ENCODE measurements at regions of chr1 and their contacts with region 1.

Region 1: DNA sequence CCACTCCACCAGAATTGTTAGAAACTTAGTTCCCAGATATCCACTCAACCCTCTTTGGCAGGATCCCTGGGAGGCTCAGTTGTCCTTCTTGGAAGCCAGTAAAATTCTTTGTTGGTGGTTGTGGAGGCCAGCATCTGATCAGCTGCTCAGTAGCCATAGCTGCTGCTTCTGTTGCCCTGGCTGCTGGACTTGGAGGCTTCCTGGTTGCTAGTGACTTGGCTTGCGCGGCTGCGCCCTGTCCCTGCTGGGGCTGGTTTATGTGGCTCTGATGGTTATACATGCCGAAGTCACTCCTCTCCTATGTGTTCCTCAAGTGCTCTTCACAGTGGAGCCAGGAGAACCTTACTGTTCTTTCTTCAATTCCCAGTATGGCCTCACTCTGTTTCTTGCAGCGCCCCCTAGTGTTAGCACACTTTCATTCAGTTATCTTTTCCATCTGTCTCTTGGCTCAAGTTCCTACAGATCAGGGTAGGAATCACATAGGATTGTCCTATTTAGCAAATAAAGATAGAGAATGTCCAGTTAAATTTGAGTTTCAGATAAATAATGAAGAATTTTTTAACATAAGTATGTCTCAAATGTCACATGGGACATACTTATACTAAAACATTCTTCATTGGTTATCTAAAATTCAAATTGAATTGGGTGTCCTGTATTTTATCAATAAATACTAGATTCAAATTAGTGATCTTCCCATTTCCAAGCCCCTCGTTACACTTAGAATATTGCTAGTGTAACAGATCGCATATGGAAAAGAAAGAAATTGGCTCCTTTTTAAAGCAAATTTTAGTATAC is 176.4 kb downstream of the TGFB2 start:
- DNase-seq: peak; percentile 51 to 85 (median 67)
- H3K4me3 ChIP-seq: no peak overlapping the region
- H3K27ac ChIP-seq: no peak overlapping the region
- H3K4me1 ChIP-seq: no peaks in the 10 kb centered on the region
- H3K27me3 ChIP-seq: no peaks in the 10 kb centered on the region
- CTCF ChIP-seq: peak; percentile 56 to 80 (median 72)
- POLR2A ChIP-seq: no peak

Region 2: GRCh38 chr1:218209351-218209861 is 312.2 kb before region 1 on chr1:
- intact Hi-C with region 1: no loop called
- DNase-seq: no peak
- H3K4me3 ChIP-seq: no peak overlapping the region
- H3K27ac ChIP-seq: no peak overlapping the region
- H3K4me1 ChIP-seq: no peaks in the 10 kb centered on the region
- H3K27me3 ChIP-seq: no peaks in the 10 kb centered on the region
- CTCF ChIP-seq: no peak
- POLR2A ChIP-seq: no peak

Region 3: DNA sequence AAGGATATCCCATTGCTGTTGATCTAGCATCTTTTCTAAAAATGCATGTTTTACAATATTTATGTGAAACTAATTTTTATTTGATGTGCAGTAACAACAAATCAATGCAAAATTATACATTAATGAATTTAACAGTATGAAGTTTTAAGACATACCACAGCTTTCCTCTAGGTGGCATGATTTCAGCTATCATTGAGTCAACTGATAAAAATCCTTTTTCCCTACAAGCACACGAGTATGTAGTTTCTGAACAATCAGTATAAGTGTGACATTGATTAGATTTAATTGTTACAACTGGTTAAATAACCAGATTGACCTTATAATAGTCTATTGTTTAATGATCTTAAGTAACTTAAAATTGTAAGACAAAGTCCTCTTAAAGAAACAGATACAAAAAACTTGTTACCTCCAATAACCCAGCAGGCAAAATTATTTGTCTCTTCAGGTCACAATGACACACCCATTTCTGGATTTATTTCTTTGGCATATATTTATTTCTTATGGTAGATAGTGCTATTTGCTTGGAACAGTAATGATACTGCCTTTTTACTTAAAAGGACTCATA is 182.2 kb before region 1 on chr1:
- intact Hi-C with region 1: loop called (anchors 5 to 10 kb)
- DNase-seq: no peak
- H3K4me3 ChIP-seq: no peak overlapping the region
- H3K27ac ChIP-seq: no peak overlapping the region
- H3K4me1 ChIP-seq: no peaks in the 10 kb centered on the region
- H3K27me3 ChIP-seq: no peaks in the 10 kb centered on the region
- CTCF ChIP-seq: peak; percentile 61 to 83 (median 74)
- POLR2A ChIP-seq: no peak

Region 4: GRCh38 chr1:218817691-218818465 is 296.3 kb after region 1 on chr1:
- intact Hi-C with region 1: no loop called
- DNase-seq: no peak
- H3K4me3 ChIP-seq: no peak overlapping the region
- H3K27ac ChIP-seq: no peak overlapping the region
- H3K4me1 ChIP-seq: no peaks in the 10 kb centered on the region
- H3K27me3 ChIP-seq: no peaks in the 10 kb centered on the region
- CTCF ChIP-seq: no peak
- POLR2A ChIP-seq: no peak